ENCODE measurements at regions of chr9 and their contacts with region 1.

Region 1: GRCh38 chr9:108761655-108762347 is 94.0 kb downstream of the ACTL7B start:
- DNase-seq: peak; percentile 65
- H3K4me3 ChIP-seq: no peak overlapping the region
- H3K27ac ChIP-seq: no peak overlapping the region
- H3K4me1 ChIP-seq: no peaks in the 10 kb centered on the region
- H3K27me3 ChIP-seq: no peaks in the 10 kb centered on the region
- CTCF ChIP-seq: peak; percentile 88

Region 2: DNA sequence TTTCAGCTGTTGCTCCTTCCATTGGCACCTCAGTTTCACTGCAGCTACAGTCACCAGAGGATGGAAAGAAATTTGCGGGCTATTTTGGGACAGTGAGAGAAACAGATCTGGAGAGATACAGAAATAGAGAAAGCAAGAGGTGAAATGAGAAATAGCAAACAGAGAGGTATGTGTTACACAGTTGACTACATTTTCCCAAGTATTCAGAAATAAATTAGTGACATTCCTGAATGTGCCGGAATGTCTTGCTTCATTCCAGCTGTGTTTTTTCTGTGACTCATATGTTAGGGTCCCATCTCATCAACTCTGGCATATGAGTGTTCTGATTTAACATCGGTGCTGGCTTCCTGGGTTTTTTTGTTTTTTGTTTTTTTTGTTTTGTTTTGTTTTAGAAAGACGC is 1962.7 kb before region 1 on chr9:
- intact Hi-C with region 1: no loop called
- DNase-seq: no peak
- H3K4me3 ChIP-seq: no peak overlapping the region
- H3K27ac ChIP-seq: no peak overlapping the region
- H3K4me1 ChIP-seq: no peaks in the 10 kb centered on the region
- H3K27me3 ChIP-seq: no peaks in the 10 kb centered on the region
- CTCF ChIP-seq: no peak

Region 3: DNA sequence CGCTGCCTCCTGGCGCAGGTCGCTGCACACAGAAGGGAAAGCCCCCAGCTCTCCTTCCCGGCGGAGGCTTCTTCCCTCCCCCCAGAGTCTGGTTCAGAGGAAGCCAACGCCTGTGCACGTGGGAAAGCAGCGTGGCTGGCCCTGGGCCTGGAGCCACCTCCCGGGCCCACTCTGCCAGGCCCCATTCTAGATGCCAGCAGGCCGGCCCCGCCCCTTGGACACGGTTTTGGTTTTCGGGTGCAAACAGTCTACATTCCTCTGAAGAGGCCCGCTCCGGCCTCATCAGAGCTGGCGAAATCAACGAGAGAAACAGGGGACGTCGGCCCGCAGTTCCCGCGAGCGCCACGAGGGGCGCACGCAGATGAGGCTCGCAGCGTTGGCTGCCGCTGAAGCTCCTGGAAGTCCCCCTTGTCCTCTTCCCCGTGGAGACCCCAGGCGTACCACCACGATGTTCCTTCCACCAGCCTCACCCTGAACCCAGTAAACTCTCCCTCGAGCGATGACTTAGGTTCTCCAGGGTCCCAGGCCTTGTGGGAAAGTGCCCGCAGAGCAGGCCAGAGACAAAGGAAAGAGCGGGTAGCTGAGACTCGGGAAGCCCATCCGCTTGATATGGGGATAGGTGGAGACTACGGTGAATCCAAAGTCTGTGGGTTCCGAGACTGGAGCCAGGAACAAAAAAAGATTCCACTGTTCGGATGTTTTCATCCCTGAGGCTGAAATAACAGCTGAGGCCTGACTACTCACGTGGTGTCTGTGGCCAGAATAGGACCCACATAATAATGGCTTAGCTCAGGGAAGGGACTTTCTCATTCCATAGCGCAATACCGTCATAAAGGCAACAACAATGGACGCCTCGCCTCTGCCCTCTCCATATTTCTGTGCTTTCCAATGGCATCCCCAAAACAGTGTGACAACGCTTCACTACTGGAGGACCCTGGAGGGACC is 1336.4 kb before region 1 on chr9:
- intact Hi-C with region 1: loop called (anchors 10 kb)
- DNase-seq: peak; percentile 75
- H3K4me3 ChIP-seq: peak overlapping the region; percentile 30
- H3K27ac ChIP-seq: no peak overlapping the region
- H3K4me1 ChIP-seq: no peaks in the 10 kb centered on the region
- H3K27me3 ChIP-seq: no peaks in the 10 kb centered on the region
- CTCF ChIP-seq: peak; percentile 96

Region 4: GRCh38 chr9:107455425-107456135 is 1306.2 kb before region 1 on chr9:
- intact Hi-C with region 1: loop called (anchors 10 kb)
- DNase-seq: no peak
- H3K4me3 ChIP-seq: no peak overlapping the region
- H3K27ac ChIP-seq: no peak overlapping the region
- H3K4me1 ChIP-seq: no peaks in the 10 kb centered on the region
- H3K27me3 ChIP-seq: no peaks in the 10 kb centered on the region
- CTCF ChIP-seq: no peak

Region 5: GRCh38 chr9:108496846-108497245 is 265.0 kb before region 1 on chr9:
- intact Hi-C with region 1: no loop called
- DNase-seq: no peak
- H3K4me3 ChIP-seq: no peak overlapping the region
- H3K27ac ChIP-seq: no peak overlapping the region
- H3K4me1 ChIP-seq: no peaks in the 10 kb centered on the region
- H3K27me3 ChIP-seq: no peaks in the 10 kb centered on the region
- CTCF ChIP-seq: no peak

Measured in colonic mucosa (tissue), 4 donors.